B cell (primary cell): ENCODE measurements at regions of chr3 and their contacts with region 1.

Region 1: DNA sequence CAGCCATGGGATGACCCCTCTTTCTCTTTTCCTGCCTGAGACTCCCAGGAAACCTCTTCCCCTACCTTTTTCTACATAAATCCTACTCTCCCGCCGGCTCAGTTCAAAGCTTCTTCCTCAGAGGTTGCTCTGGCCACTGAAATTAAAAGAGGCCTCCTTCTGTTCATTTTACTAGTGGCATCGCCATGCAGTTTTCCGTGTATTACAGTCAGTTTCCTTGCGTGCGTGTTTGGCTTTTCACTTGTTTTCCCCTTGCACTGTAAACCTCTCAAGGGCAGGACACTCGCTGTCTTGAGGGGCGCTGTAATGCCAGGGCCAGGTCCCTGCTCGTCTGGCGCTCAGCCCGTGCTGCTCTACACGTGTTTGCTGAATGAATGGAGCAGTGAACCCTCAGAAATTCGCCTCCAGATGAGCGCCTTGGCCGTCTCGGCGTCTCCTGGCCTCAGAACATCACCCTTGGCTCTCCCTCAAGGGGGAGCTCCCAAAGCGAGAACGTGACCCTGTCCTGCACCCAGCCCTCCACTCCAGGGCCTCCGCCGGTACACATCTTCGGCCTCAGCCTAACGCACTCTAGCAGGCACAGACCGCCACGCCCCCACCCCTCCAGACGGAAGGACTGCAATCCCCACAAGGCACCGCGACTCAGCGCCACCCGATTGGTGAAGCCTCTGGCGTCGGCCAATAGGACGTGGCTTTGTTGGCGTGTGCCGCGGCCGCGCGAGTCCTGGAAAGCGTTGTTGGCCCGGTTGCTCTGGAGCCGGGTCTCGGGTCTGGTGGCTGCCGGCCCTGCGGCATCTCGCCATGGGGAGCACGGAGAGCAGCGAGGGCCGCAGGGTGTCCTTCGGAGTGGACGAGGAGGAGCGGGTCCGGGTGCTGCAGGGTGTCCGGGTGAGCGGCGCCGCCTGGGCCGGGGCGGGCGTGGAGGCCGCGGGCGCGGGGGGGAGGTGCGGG is at the start of gene CHCHD6:
- DNase-seq: peak; percentile 97
- ATAC-seq: peak; percentile 96
- H3K4me3 ChIP-seq: peak within 1 kb of the TSS in 4 of 5 experiments; percentile 61 to 79 (median 75)
- H3K4me3 Mint-ChIP-seq: peak within 1 kb of the TSS; percentile 92
- H3K27ac ChIP-seq: peak within 1 kb of the TSS in 1 of 2 donors; percentile 11
- H3K27ac Mint-ChIP-seq: peak within 1 kb of the TSS; percentile 78
- H3K4me1 ChIP-seq: peaks cover 11 to 15% of the 10 kb centered on the region in 2 donors
- H3K4me1 Mint-ChIP-seq: peaks cover 17% of the 10 kb centered on the region
- H3K27me3 ChIP-seq: peaks cover 0 to 9% (median 4%) of the 10 kb centered on the region in 4 experiments
- H3K27me3 Mint-ChIP-seq: peaks cover 36% of the 10 kb centered on the region
- CTCF ChIP-seq: no peak
- total RNA-seq, gene CHCHD6: 13.5 TPM in 2 replicates

Region 2: DNA sequence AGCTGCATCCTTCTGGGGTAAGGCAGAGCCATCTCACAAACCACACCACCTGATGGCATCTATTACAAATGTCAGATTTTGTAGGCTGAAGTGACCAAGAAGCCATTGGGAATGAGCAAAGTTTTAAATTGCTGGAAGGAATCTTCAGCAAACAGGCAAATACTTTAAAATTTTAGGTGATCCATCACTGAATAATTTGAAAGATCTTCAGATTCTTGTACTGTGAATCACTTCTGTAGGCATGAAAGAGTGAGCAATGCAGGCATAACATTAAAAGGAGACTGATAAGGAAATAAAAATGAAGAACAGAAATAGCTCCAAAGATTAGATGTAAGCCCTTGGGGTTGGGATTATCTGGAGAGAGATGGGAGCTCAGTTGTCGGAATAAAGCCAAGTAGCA is 487.4 kb before region 1 on chr3:
- CTCF ChIA-PET with region 1: no interaction called
- POLR2A ChIA-PET with region 1: no interaction called
- intact Hi-C with region 1: no loop called
- DNase-seq: no peak
- ATAC-seq: no peak
- H3K4me3 ChIP-seq: no peak overlapping the region
- H3K4me3 Mint-ChIP-seq: no peak overlapping the region
- H3K27ac ChIP-seq: no peak overlapping the region
- H3K27ac Mint-ChIP-seq: no peak overlapping the region
- H3K4me1 ChIP-seq: peaks cover 4 to 9% of the 10 kb centered on the region in 2 donors
- H3K4me1 Mint-ChIP-seq: peaks cover 7% of the 10 kb centered on the region
- H3K27me3 ChIP-seq: peaks cover 0 to 45% (median 15%) of the 10 kb centered on the region in 4 experiments
- H3K27me3 Mint-ChIP-seq: peaks cover 60% of the 10 kb centered on the region
- CTCF ChIP-seq: no peak

Region 3: GRCh38 chr3:126357295-126358037 is 346.3 kb before region 1 on chr3 and contains the start of gene KLF15:
- CTCF ChIA-PET with region 1: no interaction called
- POLR2A ChIA-PET with region 1: no interaction called
- intact Hi-C with region 1: loop called (anchors 2 kb)
- DNase-seq: peak; percentile 85
- ATAC-seq: peak; percentile 93
- H3K4me3 ChIP-seq: peak within 1 kb of the TSS; percentile 12 to 84 (median 59)
- H3K4me3 Mint-ChIP-seq: peak within 1 kb of the TSS; percentile 95
- H3K27ac ChIP-seq: no peak within 1 kb of the TSS
- H3K27ac Mint-ChIP-seq: peak within 1 kb of the TSS; percentile 81
- H3K4me1 ChIP-seq: peaks cover 20 to 21% of the 10 kb centered on the region in 2 donors
- H3K4me1 Mint-ChIP-seq: peaks cover 16% of the 10 kb centered on the region
- H3K27me3 ChIP-seq: peaks cover 0 to 54% (median 22%) of the 10 kb centered on the region in 4 experiments
- H3K27me3 Mint-ChIP-seq: peaks cover 50% of the 10 kb centered on the region
- CTCF ChIP-seq: no peak
- total RNA-seq, gene KLF15: 0.83 and 2.2 TPM in 2 replicates

Region 4: GRCh38 chr3:126718561-126719445 is 15.0 kb after region 1 on chr3:
- CTCF ChIA-PET with region 1: no interaction called
- POLR2A ChIA-PET with region 1: no interaction called
- intact Hi-C with region 1: no loop called
- DNase-seq: no peak
- ATAC-seq: no peak
- H3K4me3 ChIP-seq: no peak overlapping the region
- H3K4me3 Mint-ChIP-seq: no peak overlapping the region
- H3K27ac ChIP-seq: no peak overlapping the region
- H3K27ac Mint-ChIP-seq: no peak overlapping the region
- H3K4me1 ChIP-seq: no peaks in the 10 kb centered on the region
- H3K4me1 Mint-ChIP-seq: peaks cover 4% of the 10 kb centered on the region
- H3K27me3 ChIP-seq: no peaks in the 10 kb centered on the region
- H3K27me3 Mint-ChIP-seq: no peaks in the 10 kb centered on the region
- CTCF ChIP-seq: no peak

Region 5: DNA sequence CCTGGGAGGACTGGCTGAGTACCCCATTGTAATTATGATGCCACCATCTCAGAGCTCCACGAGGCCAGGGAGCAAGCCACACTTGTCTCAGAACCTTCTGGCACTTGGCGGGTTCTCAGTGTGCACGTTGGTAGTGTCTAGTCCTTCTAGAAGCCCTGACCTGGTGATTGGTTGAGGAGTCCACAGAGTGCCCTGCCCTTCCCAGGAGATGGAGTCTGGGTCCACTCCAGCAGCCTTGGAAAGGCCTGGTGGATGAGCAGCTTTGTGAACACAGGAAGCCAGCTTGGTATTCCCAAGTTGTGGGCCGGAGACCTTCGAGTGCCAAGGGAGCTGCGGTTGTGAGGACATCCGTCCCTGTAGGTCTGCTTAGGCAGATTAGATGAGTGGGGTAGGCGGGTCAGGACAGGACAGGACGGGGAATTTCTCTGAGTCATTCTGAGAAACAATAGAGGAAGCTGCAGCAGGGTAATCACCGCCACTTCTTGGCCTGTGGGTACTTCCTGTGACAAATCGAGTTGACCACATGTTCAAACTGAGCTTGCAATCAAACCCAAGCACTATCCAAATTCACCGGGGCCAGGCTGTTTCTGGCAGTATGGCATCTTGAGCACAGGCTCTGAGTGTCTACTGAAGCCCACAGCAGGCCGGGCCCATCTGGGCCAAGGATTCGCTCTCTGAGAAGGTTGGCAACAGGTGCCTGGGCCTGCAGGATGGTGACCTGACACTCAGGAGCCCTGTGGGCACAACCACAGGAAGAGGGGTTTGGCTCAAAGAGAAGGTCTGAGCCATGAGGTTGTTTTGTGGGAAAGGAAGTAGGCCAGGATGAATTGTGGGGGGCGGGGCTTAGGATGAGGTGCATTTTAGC is 207.6 kb after region 1 on chr3:
- CTCF ChIA-PET with region 1: no interaction called
- POLR2A ChIA-PET with region 1: no interaction called
- intact Hi-C with region 1: loop called (anchors 1 kb)
- DNase-seq: peak; percentile 91
- ATAC-seq: peak; percentile 95
- H3K4me3 ChIP-seq: peak overlapping the region in 2 of 5 experiments; percentile 7 to 42
- H3K4me3 Mint-ChIP-seq: peak overlapping the region; percentile 71
- H3K27ac ChIP-seq: peak overlapping the region in 1 of 2 donors; percentile 41
- H3K27ac Mint-ChIP-seq: peak overlapping the region; percentile 75
- H3K4me1 ChIP-seq: peaks cover 23 to 31% of the 10 kb centered on the region in 2 donors
- H3K4me1 Mint-ChIP-seq: peaks cover 38% of the 10 kb centered on the region
- H3K27me3 ChIP-seq: peaks cover 0 to 64% (median 18%) of the 10 kb centered on the region in 4 experiments
- H3K27me3 Mint-ChIP-seq: peaks cover 49% of the 10 kb centered on the region
- CTCF ChIP-seq: no peak